ENCODE measurements at regions of chr1 and their contacts with region 1.

Region 1: GRCh38 chr1:21937372-21938221 is 487 bp upstream of the HSPG2 start:
- DNase-seq: peak; percentile 92

Region 2: GRCh38 chr1:21852282-21853128 is 85.1 kb before region 1 on chr1:
- intact Hi-C with region 1: no loop called
- DNase-seq: no peak

Region 3: DNA sequence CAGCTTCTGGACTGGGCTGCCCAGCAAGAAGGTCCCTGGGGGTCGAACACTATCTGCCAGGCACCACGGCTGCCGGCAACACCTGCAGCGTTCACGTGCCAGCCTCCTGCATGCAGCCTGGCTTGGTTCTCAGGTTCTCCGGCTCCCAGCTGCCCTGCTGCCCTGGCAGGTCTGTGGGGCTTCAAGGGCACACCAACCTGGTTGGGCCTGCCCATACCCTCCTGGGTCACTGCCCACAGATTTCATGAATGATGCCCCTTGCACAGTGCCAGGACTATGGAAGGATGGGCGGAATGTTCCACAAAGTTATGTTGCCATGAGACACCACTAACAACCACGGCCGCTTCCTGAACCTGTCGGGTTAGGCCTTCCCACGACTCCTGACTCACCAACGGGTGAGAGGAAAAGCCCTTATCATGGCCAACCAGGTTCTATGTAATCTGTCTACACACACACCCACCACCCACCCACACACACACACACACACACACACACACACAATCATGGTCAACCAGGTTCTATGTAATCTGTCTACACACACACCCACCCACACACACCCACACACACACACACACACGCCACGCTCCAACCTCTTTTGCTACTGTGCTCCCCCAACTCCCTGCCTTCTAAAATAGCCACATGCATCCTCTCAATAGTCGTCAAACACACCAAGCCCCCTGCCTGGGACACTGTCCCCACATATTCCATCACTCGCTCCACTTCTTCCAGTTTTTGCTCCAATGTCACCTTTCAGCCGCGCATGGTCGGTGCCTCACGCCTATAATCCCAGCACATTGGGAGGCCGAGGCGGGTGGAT is 32.7 kb before region 1 on chr1:
- intact Hi-C with region 1: loop called in 1 of 2 experiments (anchors 5 kb)
- DNase-seq: peak; percentile 89